Calu3 (cell line): ENCODE measurements at regions of chr9 and their contacts with region 1.

Region 1: DNA sequence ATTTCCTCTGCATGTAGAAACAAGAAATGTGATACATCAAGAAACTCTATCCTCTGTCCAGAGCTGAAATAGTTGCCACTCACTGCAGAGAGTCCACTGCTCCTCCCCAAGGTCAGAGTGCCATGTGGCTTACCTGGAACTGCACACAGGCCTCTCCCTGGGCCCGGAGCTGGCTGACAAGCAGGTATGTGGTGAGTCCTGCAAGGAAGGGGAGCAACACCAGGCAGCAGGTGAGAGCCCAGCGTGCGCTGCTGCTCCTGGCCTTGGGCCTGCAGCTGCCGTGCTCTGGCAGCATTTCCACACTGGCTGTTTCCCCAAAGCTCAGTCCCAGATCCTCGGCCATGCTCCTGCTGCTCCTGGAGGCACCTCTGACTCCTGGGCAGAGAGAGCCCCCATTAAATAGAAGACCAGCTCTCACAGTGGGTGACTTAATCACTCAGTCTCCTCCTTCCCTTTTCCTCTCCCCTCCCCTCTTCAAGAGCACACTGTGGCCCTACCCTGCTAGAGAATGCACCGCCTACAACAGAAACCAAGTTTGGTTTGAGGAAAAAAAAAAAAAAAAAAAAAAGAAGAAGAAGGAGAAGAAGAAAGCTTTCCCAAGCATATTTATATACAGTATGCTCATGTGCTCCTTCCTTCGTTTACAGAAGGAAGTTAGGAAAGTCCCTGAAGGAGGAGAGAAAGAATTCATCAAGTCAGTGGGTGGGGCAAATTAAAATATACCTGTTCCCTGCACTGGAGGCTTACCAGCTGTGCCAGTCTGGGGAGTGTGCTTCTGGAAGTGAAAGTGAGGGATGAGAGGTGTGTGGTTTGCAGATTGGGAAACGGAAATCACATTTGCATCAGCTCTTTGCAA is at the start of gene TNFSF15:
- DNase-seq: peak; percentile 45
- H3K4me3 Mint-ChIP-seq: peak within 1 kb of the TSS; percentile 66
- H3K27ac Mint-ChIP-seq: peak within 1 kb of the TSS; percentile 62
- H3K4me1 Mint-ChIP-seq: peaks cover 45% of the 10 kb centered on the region
- H3K27me3 Mint-ChIP-seq: no peaks in the 10 kb centered on the region
- CTCF ChIP-seq: no peak
- total RNA-seq, gene TNFSF15: 4.9 and 7.5 TPM in 2 replicates

Region 2: DNA sequence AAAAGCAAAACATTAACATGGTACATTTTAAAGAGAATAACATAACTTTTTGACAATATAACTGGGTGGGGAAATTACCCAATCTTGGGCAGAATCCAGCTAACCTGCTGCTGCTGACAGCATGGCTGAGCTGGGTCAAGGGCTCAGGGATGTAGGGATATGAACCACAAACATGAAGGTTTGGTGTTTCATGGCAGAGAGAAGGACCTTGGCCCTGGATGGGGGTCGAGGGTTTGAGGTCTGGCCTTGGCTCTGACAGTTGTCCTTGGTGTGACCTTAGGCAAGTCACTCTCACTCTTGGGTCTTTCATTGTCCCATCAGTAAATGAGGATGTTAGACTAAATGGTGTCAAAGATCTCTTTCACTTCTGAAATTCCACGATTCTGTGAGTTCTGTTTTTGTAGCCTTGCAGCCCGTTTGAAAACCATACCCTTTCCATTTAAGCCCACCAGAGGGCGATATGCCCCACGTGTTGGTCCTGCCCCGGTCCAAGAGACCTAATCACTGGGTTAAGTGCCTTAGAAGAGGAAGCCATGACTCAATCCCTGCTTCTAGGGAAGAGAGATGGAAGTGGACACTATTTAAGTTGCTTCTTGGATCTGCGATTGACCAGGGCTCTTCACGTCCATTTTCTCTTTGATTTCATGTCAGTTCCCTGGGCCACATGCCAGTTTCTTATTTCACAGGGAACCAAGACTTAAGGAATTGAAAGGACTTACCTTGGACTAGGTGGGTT is 67.1 kb before region 1 on chr9:
- CTCF ChIA-PET with region 1: no interaction called
- intact Hi-C with region 1: loop called (anchors 5 kb)
- DNase-seq: peak; percentile 69
- H3K4me3 Mint-ChIP-seq: no peak overlapping the region
- H3K27ac Mint-ChIP-seq: no peak overlapping the region
- H3K4me1 Mint-ChIP-seq: no peaks in the 10 kb centered on the region
- H3K27me3 Mint-ChIP-seq: no peaks in the 10 kb centered on the region
- CTCF ChIP-seq: peak; percentile 60

Region 3: DNA sequence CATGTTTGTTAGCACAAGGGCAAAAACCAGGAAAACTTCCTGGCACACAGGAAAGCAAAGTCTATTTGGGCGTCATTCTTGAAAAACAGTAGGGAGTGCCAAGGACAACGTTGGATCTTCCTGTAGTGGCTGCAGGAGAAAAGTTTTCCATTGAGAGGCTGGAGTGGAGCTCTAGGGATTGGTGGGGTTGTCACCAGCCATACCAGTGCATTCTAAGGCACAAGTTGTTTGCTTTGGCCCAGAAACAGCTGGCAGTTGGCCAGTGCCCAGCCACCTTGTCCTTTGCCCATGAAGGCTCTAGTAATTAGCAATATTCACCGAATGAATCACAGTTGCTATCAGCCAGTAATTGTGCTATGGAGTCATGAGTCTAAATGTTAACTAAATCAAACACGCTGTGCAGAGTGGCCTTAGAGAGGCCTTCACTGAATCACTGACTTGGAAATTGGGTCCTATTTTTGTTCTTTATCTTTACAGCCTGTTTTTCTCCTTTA is 26.5 kb before region 1 on chr9:
- CTCF ChIA-PET with region 1: no interaction called
- intact Hi-C with region 1: loop called (anchors 2 kb)
- DNase-seq: peak; percentile 89
- H3K4me3 Mint-ChIP-seq: no peak overlapping the region
- H3K27ac Mint-ChIP-seq: peak overlapping the region; percentile 75
- H3K4me1 Mint-ChIP-seq: peaks cover 41% of the 10 kb centered on the region
- H3K27me3 Mint-ChIP-seq: peaks cover 10% of the 10 kb centered on the region
- CTCF ChIP-seq: no peak

Region 4: GRCh38 chr9:114884787-114885452 is 79.0 kb after region 1 on chr9:
- CTCF ChIA-PET with region 1: no interaction called
- intact Hi-C with region 1: loop called (anchors 5 kb)
- DNase-seq: peak; percentile 78
- H3K4me3 Mint-ChIP-seq: no peak overlapping the region
- H3K27ac Mint-ChIP-seq: peak overlapping the region; percentile 81
- H3K4me1 Mint-ChIP-seq: peaks cover 22% of the 10 kb centered on the region
- H3K27me3 Mint-ChIP-seq: no peaks in the 10 kb centered on the region
- CTCF ChIP-seq: no peak

Region 5: DNA sequence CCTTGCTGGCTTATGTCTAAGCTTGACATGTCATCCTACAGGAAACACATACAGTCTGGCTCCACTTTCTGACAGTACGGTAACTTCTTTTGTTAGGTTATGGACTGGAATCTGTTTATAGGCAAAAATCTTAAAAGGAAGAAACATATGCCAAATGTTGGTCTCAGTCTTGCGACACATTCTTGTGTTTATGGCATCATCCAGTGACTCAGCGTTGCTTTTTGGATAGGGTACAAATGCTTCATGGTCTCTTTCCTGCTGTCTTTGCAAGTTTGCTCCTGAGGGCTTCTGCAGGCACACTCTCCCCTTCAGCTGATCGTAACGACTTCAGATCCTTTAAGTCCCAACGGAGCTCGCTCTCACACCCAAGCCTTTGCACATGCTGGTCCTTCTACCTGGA is 148.0 kb after region 1 on chr9:
- CTCF ChIA-PET with region 1: no interaction called
- intact Hi-C with region 1: no loop called
- DNase-seq: no peak
- H3K4me3 Mint-ChIP-seq: no peak overlapping the region
- H3K27ac Mint-ChIP-seq: no peak overlapping the region
- H3K4me1 Mint-ChIP-seq: no peaks in the 10 kb centered on the region
- H3K27me3 Mint-ChIP-seq: peaks cover 58% of the 10 kb centered on the region
- CTCF ChIP-seq: no peak